Endothelial cell of umbilical vein (primary cell): ENCODE measurements at regions of chr9 and their contacts with region 1.

Region 1: DNA sequence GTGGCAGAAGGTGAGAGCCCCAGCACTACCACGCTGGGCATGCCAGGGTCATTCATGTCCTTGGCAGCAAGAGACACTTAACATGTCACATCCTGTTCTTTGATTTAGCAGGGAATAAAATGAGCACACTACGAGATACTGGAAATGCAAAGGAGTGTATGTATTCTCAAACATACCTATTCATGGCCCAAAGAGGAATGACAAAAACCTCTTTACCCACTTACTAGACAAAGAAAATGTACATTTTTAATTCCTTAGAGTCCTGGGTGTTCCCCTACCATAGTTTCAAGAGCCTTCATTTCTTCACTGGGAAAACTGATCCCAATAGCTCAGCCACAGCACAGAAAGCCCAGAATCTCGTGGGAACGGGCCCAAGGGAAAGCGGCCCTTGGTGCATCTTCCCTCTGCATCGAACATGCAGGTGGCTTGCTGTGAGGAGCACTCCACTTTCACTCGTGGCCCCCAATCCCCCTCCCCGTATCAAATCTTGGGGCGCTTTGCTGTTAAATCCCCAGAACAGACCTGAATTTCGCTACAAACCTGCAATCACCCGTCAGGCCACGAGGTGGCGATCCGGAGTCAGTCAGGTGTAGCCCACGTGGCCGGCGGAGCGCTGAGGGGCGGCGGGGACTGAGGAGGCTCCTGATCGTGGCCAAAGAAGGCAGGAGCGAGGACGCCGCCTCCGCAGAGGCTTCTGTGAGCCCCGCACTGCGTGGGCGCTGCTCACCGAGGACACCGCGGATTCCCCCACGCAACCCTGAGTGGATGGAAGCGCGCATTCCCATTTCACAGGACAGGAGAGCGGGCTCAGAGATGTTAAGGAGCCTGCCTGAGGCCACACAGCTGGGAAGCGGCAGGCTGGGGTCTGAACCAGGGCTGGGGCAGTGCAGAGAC is 91.4 kb downstream of the LMX1B start:
- DNase-seq: peak; percentile 69
- H3K4me3 ChIP-seq: no peak overlapping the region
- H3K27ac ChIP-seq: no peak overlapping the region
- H3K4me1 ChIP-seq: no peaks in the 10 kb centered on the region
- H3K27me3 ChIP-seq: peaks cover 0 to 5% of the 10 kb centered on the region in 2 experiments
- CTCF ChIP-seq: peak; percentile 87 to 90
- POLR2A ChIP-seq: no peak

Region 2: DNA sequence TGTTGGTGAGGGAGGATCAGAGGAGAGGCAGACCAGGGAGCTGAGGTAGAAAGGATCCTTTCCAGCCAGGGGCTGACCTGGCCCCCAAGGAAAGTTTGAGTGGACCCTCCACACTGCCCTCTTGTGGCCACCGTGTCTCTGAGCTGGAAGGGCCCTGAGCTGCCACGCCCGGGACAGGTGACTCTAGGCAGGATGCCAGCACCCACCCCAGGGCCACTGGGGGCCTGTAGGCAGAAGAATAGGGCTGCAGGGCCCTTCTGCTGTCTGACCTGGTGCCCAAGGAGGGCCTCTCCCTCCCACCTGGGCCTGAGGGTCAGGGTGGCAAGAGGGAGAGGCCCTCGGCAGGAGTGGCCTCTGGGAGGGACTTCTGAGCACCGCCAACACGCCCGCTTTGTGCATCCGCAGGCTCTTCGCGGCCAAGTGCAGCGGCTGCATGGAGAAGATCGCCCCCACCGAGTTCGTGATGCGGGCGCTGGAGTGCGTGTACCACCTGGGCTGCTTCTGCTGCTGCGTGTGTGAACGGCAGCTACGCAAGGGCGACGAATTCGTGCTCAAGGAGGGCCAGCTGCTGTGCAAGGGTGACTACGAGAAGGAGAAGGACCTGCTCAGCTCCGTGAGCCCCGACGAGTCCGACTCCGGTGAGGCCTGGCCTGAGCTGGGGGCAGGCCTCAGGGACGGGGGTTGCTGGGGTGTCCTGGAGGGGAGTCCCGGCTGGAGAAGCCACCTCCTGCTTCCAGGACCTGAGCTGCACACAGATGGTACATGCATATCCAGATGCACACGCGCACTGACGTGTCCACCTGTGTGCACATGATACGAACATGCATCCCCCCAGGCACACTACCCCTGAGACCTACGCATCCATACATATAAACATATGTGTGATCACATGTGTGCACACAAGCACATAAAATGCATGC is 14.4 kb before region 1 on chr9:
- CTCF ChIA-PET with region 1: interaction called, 68 read pairs
- POLR2A ChIA-PET with region 1: no interaction called
- dilution Hi-C with region 1: no loop called
- intact Hi-C with region 1: no loop called
- DNase-seq: no peak
- H3K4me3 ChIP-seq: no peak overlapping the region
- H3K27ac ChIP-seq: no peak overlapping the region
- H3K4me1 ChIP-seq: no peaks in the 10 kb centered on the region
- H3K27me3 ChIP-seq: peaks cover 3 to 4% of the 10 kb centered on the region in 2 experiments
- CTCF ChIP-seq: peak; percentile 65 to 84
- POLR2A ChIP-seq: no peak

Region 3: GRCh38 chr9:126722252-126723078 is 17.3 kb after region 1 on chr9:
- CTCF ChIA-PET with region 1: interaction called, 18 read pairs
- POLR2A ChIA-PET with region 1: no interaction called
- dilution Hi-C with region 1: no loop called
- intact Hi-C with region 1: no loop called
- DNase-seq: peak; percentile 30
- H3K4me3 ChIP-seq: peak overlapping the region; percentile 43 to 58 (median 57)
- H3K27ac ChIP-seq: no peak overlapping the region
- H3K4me1 ChIP-seq: no peaks in the 10 kb centered on the region
- H3K27me3 ChIP-seq: peaks cover 9 to 16% of the 10 kb centered on the region in 2 experiments
- CTCF ChIP-seq: no peak
- POLR2A ChIP-seq: no peak

Region 4: DNA sequence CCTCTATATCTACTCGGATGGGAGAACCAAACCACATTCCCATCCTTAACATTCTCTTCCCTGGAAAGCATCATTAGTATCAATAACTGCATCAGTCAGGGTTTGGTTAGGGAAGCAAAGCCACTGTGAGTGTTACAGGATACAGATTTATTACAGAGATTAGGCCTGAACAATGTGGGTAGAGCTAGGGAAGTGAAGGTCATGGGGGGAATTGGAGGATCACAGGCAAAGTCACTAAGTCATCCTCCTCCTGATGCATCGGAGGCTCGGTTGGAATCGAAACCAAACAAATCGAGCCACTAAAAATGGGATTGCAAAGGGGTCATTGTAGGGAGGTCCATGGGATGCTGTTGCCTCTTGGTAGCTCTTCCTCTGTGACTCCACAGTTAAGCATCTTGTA is 37.9 kb after region 1 on chr9:
- CTCF ChIA-PET with region 1: interaction called, 28 read pairs
- POLR2A ChIA-PET with region 1: no interaction called
- dilution Hi-C with region 1: no loop called
- intact Hi-C with region 1: no loop called
- DNase-seq: no peak
- H3K4me3 ChIP-seq: no peak overlapping the region
- H3K27ac ChIP-seq: no peak overlapping the region
- H3K4me1 ChIP-seq: no peaks in the 10 kb centered on the region
- H3K27me3 ChIP-seq: peaks cover 4 to 22% of the 10 kb centered on the region in 2 experiments
- CTCF ChIP-seq: no peak
- POLR2A ChIP-seq: no peak

Region 5: GRCh38 chr9:126773004-126773607 is 68.0 kb after region 1 on chr9:
- CTCF ChIA-PET with region 1: interaction called, 675 read pairs
- POLR2A ChIA-PET with region 1: no interaction called
- dilution Hi-C with region 1: no loop called
- intact Hi-C with region 1: no loop called
- DNase-seq: no peak
- H3K4me3 ChIP-seq: no peak overlapping the region
- H3K27ac ChIP-seq: no peak overlapping the region
- H3K4me1 ChIP-seq: no peaks in the 10 kb centered on the region
- H3K27me3 ChIP-seq: peaks cover 0 to 3% of the 10 kb centered on the region in 2 experiments
- CTCF ChIP-seq: peak; percentile 38 to 48
- POLR2A ChIP-seq: no peak

Region 6: DNA sequence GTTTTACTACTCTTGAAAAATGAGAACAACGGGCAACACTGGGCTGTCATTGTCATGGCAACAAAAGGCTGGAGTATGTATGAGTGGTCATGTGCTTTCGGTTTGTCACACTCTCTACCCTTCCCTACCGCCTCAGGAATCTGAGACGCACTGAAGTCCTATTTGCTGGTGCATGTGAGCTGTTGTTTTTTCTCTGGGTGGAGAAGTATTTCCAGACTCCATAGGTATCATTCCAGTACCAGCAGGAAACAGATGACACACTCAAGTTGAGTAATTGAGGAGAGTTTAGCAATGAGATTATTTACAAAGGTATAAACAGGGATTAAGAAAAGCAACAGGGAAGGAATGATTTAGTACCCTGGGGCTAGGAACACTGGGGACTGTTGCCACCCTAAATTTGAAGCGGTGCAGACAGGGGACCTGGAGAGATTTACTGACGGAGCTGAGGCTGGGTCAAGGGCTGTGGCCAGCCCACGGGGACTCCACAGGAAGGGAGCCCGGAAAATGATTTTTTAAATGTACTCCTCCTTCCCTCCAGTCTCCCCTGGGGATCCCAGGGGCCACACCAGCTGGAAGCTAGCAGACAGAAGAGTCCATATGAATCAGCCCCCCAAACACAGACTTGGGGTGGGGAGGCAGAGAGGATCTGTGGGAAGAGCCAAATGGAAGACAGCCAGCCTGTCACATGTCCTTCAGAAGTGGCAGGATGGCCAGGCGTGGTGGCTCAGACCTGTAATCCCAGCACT is 86.5 kb after region 1 on chr9:
- CTCF ChIA-PET with region 1: interaction called, 675 read pairs
- POLR2A ChIA-PET with region 1: no interaction called
- dilution Hi-C with region 1: no loop called
- intact Hi-C with region 1: no loop called
- DNase-seq: no peak
- H3K4me3 ChIP-seq: no peak overlapping the region
- H3K27ac ChIP-seq: no peak overlapping the region
- H3K4me1 ChIP-seq: no peaks in the 10 kb centered on the region
- H3K27me3 ChIP-seq: peaks cover 17 to 30% of the 10 kb centered on the region in 2 experiments
- CTCF ChIP-seq: no peak
- POLR2A ChIP-seq: no peak